Right ventricle myocardium superior (tissue), 1 donor: ENCODE measurements at regions of chr14 and their contacts with region 1.

Region 1: GRCh38 chr14:76050797-76051392 is 65.3 kb downstream of the IFT43 start:
- DNase-seq: no peak
- ATAC-seq: peak; percentile 84

Region 2: GRCh38 chr14:76121089-76121748 is 70.3 kb after region 1 on chr14:
- intact Hi-C with region 1: no loop called
- DNase-seq: no peak
- ATAC-seq: no peak

Region 3: GRCh38 chr14:76320486-76320885 is 269.6 kb after region 1 on chr14:
- intact Hi-C with region 1: no loop called
- DNase-seq: no peak
- ATAC-seq: no peak

Region 4: DNA sequence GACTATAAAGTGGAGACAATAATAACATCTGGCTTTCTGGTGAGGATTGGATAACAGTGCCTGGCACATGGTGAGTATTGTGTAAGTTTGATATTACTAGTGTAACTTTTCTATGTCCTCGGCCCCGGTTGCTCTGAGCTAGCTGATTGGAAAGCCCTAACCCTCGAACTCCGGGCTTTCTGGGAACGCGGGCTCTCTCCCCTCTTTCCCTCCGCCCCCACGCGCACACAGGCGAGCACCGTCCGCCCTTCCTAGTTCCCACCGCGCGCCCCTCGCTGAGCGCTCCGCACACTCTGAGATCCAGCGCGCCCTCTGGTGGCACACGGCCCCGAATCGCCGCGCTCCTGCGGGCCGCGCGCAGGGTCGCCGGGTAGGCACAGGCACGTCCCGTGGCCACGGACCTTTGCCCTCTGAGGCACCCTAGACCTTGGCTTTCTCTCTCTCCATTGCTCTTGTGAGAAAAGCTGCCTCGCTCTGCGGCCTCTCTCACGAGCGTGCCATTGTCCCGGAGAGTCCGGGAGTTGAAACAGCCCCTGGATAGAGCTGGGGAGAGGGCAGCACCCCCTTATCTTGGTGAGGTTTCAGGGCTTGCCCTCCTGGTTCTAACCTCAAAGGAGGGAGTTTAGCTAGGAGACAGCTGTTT is 301.9 kb after region 1 on chr14:
- intact Hi-C with region 1: loop called (anchors 2 kb)
- DNase-seq: peak; percentile 79
- ATAC-seq: peak; percentile 92

Region 5: DNA sequence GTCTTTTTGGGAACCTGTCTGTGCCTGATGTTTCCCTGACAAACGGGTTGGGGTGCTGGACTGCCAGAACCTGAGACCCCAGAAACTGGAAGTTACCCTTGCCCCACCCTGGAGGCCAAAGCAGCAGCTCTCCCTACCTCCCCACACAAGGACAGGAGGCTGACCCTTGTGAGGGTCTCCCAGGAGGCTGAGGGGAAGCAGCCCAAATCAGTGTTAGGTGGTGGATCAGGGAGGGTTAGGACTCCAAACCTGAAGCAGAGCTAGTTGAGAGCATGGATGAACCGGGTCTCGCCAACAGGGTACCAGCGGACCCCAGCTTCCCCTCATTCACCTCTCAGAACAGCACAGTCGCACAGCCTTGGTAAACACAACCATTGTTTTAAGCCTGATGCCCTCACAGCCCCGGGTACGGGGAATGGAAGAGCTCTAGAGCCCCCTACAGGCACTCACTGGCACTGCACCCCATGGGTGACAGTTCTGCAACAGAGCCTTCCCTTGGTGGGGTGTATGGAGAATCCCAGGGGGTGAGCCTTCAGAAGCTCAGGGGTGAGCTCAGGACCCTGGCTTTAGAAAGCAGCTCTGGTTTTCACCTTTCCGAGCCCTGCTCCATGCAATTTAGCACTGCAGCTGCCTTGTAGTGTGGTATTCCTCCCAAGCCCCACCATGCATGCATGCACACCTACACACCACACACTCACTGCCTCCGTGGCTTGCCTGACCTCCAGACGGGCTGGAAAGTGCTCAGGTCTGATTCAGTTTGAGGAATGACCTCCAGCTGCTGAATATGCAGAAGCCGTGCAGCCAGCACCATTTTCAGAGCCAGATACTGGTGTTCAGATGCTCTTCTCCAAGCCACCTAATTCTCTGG is 336.3 kb after region 1 on chr14:
- intact Hi-C with region 1: loop called (anchors 5 kb)
- DNase-seq: peak; percentile 71
- ATAC-seq: peak; percentile 90

Region 6: DNA sequence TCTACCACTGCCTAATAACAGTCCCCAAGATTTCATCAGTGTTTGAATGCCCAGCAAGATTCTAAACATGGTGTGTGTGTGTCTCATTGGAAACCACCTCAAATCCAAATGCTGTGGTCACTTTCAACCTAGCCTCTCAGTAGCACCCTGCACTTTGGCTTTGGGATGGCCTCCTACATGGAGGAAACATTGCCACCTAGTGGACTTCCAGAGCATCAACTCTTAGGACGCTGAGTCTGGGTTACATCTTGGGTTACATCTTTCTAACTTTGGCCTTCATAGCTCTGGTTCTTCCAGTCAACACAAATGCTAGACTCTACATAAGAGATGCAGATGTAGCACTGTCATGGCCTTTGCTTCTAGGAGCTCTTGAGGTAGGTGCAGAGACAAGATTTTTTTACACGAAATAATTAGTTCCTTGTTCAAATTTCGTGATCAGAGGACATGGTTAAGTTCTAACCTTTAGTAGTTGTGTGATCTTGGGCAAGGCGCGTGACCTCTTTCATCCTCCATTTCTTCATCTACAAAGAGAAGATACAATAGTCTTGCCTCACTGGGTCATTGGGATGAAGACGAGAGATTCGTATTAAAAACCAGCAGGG is 596.9 kb after region 1 on chr14:
- intact Hi-C with region 1: loop called (anchors 5 kb)
- DNase-seq: no peak
- ATAC-seq: peak; percentile 68

Region 7: GRCh38 chr14:77014004-77014604 is 963.2 kb after region 1 on chr14:
- intact Hi-C with region 1: no loop called
- DNase-seq: peak; percentile 80
- ATAC-seq: peak; percentile 95